Vagina (tissue), 2 donors: ENCODE measurements at regions of chr15 and their contacts with region 1.

Region 1: DNA sequence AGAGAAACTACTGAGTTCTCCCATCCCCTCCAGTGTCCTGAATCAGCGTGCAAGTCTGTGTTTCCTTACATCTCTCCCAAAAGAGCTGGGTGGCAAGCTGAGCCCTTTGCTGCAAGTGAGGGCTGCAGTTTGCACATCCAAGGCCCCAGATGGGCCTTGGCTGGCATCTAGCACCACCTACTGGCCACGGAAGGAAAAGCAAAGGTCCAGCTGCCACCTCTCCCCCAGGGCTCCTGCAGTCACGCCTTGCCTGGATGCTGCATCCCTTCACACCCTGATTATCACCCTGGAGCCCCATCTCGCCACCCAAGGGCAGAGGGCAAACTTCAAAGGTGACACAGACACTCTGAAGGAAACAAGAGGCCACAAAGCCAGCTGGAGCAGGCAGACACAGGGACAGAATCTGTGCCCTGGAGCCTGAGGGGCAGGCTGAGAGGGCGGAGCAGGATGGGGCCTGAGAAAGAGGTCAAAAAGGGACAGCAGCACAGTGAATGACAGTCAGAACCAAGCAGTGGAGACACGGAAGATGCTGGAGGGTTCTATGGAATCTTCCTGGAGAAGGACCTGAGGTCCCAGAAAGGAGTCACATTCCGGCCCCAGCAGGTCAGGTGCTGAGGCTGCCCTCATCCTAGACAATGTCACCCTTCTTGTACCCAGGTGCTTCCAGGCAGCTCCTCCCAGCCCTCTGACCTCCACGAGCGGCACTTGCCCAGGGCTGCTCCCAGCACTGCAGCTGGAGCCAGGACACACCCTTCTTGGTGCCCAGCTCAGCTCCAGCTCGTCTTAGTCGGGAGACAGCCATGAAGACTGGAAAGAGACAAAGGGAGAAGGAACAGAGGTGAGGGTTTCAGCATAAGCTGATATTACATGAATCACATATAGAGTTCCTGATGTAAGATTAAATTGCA is 18.3 kb upstream of the NTRK3 start:
- DNase-seq: no peak
- H3K4me3 ChIP-seq: no peak overlapping the region
- H3K27ac ChIP-seq: no peak overlapping the region
- H3K4me1 ChIP-seq: no peaks in the 10 kb centered on the region
- H3K27me3 ChIP-seq: no peaks in the 10 kb centered on the region
- CTCF ChIP-seq: peak; percentile 39 to 69 (median 68)
- POLR2A ChIP-seq: no peak

Region 2: DNA sequence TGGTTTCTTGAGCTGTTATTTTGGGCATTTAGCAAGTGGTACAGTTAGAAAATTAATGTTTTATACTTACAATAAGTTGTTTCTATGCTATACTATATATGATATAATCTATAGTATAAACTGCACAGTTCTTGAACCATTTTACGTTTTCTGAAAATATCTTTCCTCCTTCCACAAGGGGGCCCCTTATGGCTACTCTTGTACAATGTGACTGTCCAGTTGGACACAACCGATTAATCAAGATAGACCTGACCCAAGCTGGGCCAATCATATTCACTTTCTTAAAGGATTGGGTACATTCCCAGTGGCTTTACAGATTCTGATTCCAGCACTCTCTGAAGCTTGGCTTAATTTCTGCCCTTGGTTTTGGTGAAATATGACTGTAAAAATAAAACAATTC is 1241.8 kb before region 1 on chr15:
- intact Hi-C with region 1: loop called (anchors 5 kb)
- DNase-seq: no peak
- H3K4me3 ChIP-seq: no peak overlapping the region
- H3K27ac ChIP-seq: no peak overlapping the region
- H3K4me1 ChIP-seq: no peaks in the 10 kb centered on the region
- H3K27me3 ChIP-seq: no peaks in the 10 kb centered on the region
- CTCF ChIP-seq: no peak
- POLR2A ChIP-seq: no peak

Region 3: GRCh38 chr15:87672309-87673288 is 602.2 kb before region 1 on chr15:
- intact Hi-C with region 1: loop called (anchors 10 kb)
- DNase-seq: no peak
- H3K4me3 ChIP-seq: no peak overlapping the region
- H3K27ac ChIP-seq: no peak overlapping the region
- H3K4me1 ChIP-seq: no peaks in the 10 kb centered on the region
- H3K27me3 ChIP-seq: no peaks in the 10 kb centered on the region
- CTCF ChIP-seq: peak in 1 of 3 experiments; percentile 10
- POLR2A ChIP-seq: no peak